Left colon (tissue), 2 donors: ENCODE measurements at regions of chr4 and their contacts with region 1.

Region 1: GRCh38 chr4:123116412-123116811 is 194.0 kb upstream of the NUDT6 start:
- DNase-seq: no peak
- ATAC-seq: peak; percentile 67

Region 2: GRCh38 chr4:123380728-123381716 is 264.6 kb after region 1 on chr4:
- intact Hi-C with region 1: loop called in 1 of 2 experiments (anchors 10 kb)
- DNase-seq: no peak
- ATAC-seq: no peak

Region 3: DNA sequence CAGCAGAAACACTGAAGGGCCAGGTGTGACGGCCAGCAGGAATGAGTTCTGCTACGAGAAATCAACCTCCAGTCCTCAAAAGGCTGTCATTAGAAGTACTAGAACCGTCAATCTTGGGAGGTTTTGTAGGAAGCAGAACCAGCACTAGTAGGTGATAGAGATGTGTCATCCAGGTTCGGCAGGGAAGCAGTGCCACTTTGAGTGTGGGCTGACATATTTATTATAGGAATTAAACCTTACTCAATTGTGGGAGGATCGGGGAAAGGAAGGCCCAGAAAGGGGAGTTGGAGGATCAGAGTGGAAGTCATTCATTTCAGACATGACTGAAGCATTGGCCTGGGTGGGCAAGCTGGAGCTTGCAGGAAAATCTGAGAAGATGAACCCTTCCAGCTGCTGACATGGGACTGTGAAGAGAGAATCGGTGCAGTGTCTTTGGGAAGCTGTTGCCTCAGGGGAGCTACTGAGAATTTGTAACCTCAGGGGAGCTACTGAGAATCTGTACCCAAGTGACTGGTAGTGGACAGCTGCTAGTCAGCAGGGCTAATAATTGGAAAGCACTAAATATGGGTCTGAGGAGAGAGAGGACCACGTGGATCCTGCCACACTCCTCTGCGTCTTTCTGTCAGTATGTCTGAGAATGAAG is 457.6 kb after region 1 on chr4:
- intact Hi-C with region 1: loop called in 1 of 2 experiments (anchors 10 kb)
- DNase-seq: no peak
- ATAC-seq: no peak